ENCODE measurements at regions of chr7 and their contacts with region 1.

Region 1: DNA sequence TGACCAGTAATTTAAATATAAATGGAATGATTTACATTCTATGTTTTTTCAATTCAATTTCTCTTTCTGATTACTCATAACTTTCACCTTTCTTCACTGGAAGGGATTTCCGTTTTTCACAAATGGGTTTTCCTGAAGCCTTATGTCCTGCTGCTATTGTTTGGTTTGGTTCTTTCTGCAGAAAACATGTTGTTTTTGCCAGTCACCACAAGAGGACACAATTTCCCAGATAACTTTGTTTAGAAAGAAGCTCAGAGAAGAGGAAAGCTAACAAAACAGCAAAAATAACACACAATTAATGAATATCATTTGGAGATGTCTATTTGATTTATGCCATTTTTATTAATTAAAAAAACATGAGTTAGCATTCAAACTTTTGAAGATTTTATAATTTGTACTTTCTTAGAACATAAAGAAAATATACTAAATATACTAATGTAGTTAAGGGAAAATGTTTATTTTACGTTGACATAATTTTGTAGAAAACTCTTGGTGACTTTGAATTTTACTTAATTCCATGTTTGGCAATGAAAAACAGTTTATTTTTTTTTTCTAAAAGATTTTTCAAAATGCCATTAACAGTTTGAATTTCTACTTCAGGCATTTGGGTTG is 4.6 kb upstream of the TWIST1 start:
- DNase-seq: peak; percentile 37
- ATAC-seq: peak; percentile 60; the same call in 1 of the 2 replicates
- H3K4me3 ChIP-seq: no peak overlapping the region
- H3K27ac ChIP-seq: no peak overlapping the region
- H3K4me1 ChIP-seq: no peaks in the 10 kb centered on the region
- H3K27me3 ChIP-seq: peaks cover 9% of the 10 kb centered on the region; the same call in 1 of the 2 replicates
- CTCF ChIP-seq: peak; percentile 69 to 80 (median 78)
- POLR2A ChIP-seq: no peak
- RAD21 ChIP-seq: peak; percentile 84

Region 2: DNA sequence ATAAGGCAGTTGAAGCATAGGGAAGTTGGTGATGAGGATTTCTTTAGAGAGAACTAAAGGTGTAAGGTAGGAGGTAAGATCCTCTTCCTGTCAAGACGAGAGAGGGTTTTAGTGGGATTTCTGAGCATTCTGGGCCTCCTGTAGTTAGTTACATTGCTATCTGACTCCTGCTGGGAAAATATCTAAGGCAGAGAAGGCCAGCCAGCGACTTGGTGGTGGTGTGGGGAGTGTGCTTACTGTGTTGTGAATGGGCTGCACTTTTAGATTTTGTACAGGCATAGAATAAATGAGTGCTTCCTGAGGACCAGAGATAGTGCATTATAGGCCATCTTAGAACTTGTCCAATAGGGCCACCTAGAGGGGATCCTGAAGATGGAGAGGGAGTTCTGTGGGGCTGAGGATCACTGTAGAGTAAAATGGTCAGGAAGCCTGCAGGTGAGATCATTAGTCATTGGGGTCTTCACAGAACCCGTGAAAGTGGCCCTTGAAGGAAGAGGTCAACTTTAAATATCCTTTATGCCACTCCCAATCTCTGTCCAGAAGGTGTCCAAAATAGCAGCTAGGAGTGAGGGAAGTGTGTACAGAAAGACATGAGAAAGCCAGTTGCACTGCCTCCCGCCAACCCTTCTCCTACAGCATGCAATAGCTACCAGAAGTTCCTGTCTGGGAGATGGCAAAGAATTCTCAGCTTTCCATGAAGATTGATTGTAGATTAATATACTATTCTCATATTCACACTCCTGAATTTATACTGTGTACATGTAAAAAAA is 320.1 kb after region 1 on chr7:
- CTCF ChIA-PET with region 1: interaction called, 14 read pairs
- POLR2A ChIA-PET with region 1: no interaction called
- RAD21 ChIA-PET with region 1: interaction called, 3 to 5 read pairs
- intact Hi-C with region 1: loop called (anchors 1 kb)
- DNase-seq: peak; percentile 50
- ATAC-seq: peak; percentile 99
- H3K4me3 ChIP-seq: no peak overlapping the region
- H3K27ac ChIP-seq: no peak overlapping the region
- H3K4me1 ChIP-seq: no peaks in the 10 kb centered on the region
- H3K27me3 ChIP-seq: no peaks in the 10 kb centered on the region
- CTCF ChIP-seq: peak; percentile 52 to 63 (median 58); a peak in 5 of 6 replicates
- POLR2A ChIP-seq: no peak
- RAD21 ChIP-seq: peak; percentile 79

Region 3: GRCh38 chr7:19491821-19492452 is 369.9 kb after region 1 on chr7:
- CTCF ChIA-PET with region 1: interaction called, 20 read pairs
- POLR2A ChIA-PET with region 1: no interaction called
- RAD21 ChIA-PET with region 1: interaction called in 1 of 2 experiments, 3 read pairs
- intact Hi-C with region 1: no loop called
- DNase-seq: peak; percentile 28
- ATAC-seq: no peak
- H3K4me3 ChIP-seq: no peak overlapping the region
- H3K27ac ChIP-seq: no peak overlapping the region
- H3K4me1 ChIP-seq: no peaks in the 10 kb centered on the region
- H3K27me3 ChIP-seq: no peaks in the 10 kb centered on the region
- CTCF ChIP-seq: peak; percentile 12 to 64 (median 56); a peak in 4 of 6 replicates
- POLR2A ChIP-seq: no peak
- RAD21 ChIP-seq: peak; percentile 25; the same call in 1 of the 2 replicates

Region 4: DNA sequence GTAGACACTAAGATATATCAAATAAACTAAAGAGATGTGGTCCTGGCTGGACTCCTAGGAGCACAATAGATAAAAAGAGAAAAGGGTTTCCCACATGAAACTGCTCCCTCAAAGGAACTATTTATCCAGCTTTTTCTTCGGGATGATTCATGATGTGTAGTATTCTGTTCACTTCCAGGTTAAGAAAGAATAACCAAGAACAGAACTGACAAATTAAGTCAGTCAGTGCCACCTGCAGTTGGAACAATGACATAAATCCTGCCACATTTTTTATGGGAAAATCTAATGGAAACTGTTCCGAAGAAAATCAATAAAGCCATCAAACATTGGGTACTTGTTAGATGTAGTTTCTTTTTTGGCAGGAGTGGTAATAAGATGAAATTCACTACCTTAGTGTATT is 499.7 kb after region 1 on chr7:
- CTCF ChIA-PET with region 1: interaction called, 4 read pairs
- POLR2A ChIA-PET with region 1: no interaction called
- RAD21 ChIA-PET with region 1: no interaction called
- intact Hi-C with region 1: loop called (anchors 1 kb)
- DNase-seq: peak; percentile 24
- ATAC-seq: peak; percentile 52; the same call in 1 of the 2 replicates
- H3K4me3 ChIP-seq: no peak overlapping the region
- H3K27ac ChIP-seq: no peak overlapping the region
- H3K4me1 ChIP-seq: peaks cover 0 to 8% of the 10 kb centered on the region in 2 experiments; a peak in 2 of 4 replicates
- H3K27me3 ChIP-seq: no peaks in the 10 kb centered on the region
- CTCF ChIP-seq: peak; percentile 4 to 41 (median 35); a peak in 3 of 6 replicates
- POLR2A ChIP-seq: no peak
- RAD21 ChIP-seq: peak; percentile 68

Region 5: DNA sequence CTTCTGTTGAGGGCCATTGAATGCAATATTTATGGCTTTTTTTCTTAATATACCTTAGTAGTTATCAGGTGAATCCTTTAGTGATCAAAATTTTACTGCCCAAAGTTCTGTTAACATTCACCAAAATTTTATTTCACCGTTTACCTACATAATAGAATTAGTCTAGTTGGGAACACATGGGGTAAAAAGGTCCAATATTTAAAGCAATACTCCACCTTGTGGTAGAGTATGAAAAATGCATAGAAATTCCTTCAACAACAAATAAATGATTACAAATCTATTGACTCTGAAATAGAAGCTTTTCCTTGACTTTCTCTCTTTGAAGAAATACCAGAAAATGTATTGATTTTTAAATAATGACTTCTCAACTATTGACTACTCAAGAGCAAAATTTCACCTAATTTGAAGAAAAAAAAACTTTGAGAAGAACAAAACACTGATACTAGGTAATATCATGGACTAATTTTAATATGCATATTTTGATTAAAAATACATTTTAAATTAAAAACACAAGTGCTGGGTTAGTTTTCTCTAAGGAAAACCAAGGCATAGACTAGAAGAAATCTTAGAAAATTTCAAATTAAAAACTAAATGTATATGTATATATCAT is 543.4 kb after region 1 on chr7:
- CTCF ChIA-PET with region 1: interaction called, 10 read pairs
- POLR2A ChIA-PET with region 1: no interaction called
- RAD21 ChIA-PET with region 1: interaction called in 1 of 2 experiments, 3 read pairs
- intact Hi-C with region 1: loop called (anchors 5 kb)
- DNase-seq: peak; percentile 12
- ATAC-seq: no peak
- H3K4me3 ChIP-seq: no peak overlapping the region
- H3K27ac ChIP-seq: no peak overlapping the region
- H3K4me1 ChIP-seq: no peaks in the 10 kb centered on the region
- H3K27me3 ChIP-seq: no peaks in the 10 kb centered on the region
- CTCF ChIP-seq: peak; percentile 33 to 69 (median 42); a peak in 4 of 6 replicates
- POLR2A ChIP-seq: no peak
- RAD21 ChIP-seq: peak; percentile 69

Measured in HCT116 (cell line).